B cell (primary cell): ENCODE measurements at regions of chrX and their contacts with region 1.

Region 1: GRCh38 chrX:63350941-63351616 is at the start of gene SPIN4:
- DNase-seq: peak; percentile 77
- ATAC-seq: peak; percentile 95
- H3K4me3 ChIP-seq: peak within 1 kb of the TSS; percentile 55 to 70 (median 63)
- H3K4me3 Mint-ChIP-seq: peak within 1 kb of the TSS; percentile 99
- H3K27ac ChIP-seq: peak within 1 kb of the TSS; percentile 28 to 29
- H3K27ac Mint-ChIP-seq: peak within 1 kb of the TSS; percentile 88
- H3K4me1 ChIP-seq: peaks cover 0 to 3% of the 10 kb centered on the region in 2 donors
- H3K4me1 Mint-ChIP-seq: peaks cover 16% of the 10 kb centered on the region
- H3K27me3 ChIP-seq: no peaks in the 10 kb centered on the region
- H3K27me3 Mint-ChIP-seq: no peaks in the 10 kb centered on the region
- CTCF ChIP-seq: no peak
- total RNA-seq, gene SPIN4: 5.4 and 5.8 TPM in 2 replicates

Region 2: GRCh38 chrX:63285375-63285774 is 65.7 kb before region 1 on chrX:
- CTCF ChIA-PET with region 1: no interaction called
- POLR2A ChIA-PET with region 1: no interaction called
- intact Hi-C with region 1: no loop called
- DNase-seq: no peak
- ATAC-seq: no peak
- H3K4me3 ChIP-seq: no peak overlapping the region
- H3K4me3 Mint-ChIP-seq: no peak overlapping the region
- H3K27ac ChIP-seq: no peak overlapping the region
- H3K27ac Mint-ChIP-seq: no peak overlapping the region
- H3K4me1 ChIP-seq: no peaks in the 10 kb centered on the region
- H3K4me1 Mint-ChIP-seq: no peaks in the 10 kb centered on the region
- H3K27me3 ChIP-seq: no peaks in the 10 kb centered on the region
- H3K27me3 Mint-ChIP-seq: no peaks in the 10 kb centered on the region
- CTCF ChIP-seq: no peak

Region 3: DNA sequence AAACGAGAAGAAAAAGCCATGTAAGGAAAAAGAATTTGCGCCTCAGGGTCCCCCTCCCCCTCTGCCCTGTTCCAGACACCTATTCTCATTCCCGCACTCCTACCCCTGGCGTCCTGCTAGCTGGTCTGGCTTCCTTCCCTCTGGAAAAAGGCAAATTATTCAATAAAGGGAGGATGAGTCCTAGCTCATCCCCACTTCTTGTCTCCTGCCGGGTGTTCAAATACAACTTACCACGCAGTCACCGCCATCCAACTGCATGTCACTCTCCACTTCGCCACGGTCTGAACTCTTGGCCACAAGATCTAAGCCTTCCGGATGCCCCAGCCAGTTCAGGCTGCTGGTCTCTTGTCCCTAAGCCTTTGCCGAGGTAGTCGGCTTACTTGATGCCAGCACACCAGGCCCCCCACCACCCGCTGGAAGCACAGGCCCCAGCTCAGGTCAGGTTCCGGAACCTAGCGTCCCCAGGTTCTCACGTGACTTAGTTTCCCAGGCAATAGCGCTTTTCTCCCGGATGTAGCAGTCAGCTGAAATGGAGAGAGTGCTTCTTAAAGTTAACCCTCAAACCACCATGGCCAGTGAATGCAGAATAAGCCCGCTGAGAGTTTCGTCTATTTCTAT is 209.6 kb after region 1 on chrX:
- CTCF ChIA-PET with region 1: no interaction called
- POLR2A ChIA-PET with region 1: no interaction called
- intact Hi-C with region 1: loop called (anchors 5 kb)
- DNase-seq: peak; percentile 63
- ATAC-seq: peak; percentile 68
- H3K4me3 ChIP-seq: peak overlapping the region; percentile 62 to 77 (median 63)
- H3K4me3 Mint-ChIP-seq: peak overlapping the region; percentile 99
- H3K27ac ChIP-seq: peak overlapping the region; percentile 38 to 75
- H3K27ac Mint-ChIP-seq: peak overlapping the region; percentile 91
- H3K4me1 ChIP-seq: peaks cover 6 to 8% of the 10 kb centered on the region in 2 donors
- H3K4me1 Mint-ChIP-seq: peaks cover 29% of the 10 kb centered on the region
- H3K27me3 ChIP-seq: peaks cover 0 to under 1% (median 0%) of the 10 kb centered on the region in 4 experiments
- H3K27me3 Mint-ChIP-seq: no peaks in the 10 kb centered on the region
- CTCF ChIP-seq: no peak

Region 4: DNA sequence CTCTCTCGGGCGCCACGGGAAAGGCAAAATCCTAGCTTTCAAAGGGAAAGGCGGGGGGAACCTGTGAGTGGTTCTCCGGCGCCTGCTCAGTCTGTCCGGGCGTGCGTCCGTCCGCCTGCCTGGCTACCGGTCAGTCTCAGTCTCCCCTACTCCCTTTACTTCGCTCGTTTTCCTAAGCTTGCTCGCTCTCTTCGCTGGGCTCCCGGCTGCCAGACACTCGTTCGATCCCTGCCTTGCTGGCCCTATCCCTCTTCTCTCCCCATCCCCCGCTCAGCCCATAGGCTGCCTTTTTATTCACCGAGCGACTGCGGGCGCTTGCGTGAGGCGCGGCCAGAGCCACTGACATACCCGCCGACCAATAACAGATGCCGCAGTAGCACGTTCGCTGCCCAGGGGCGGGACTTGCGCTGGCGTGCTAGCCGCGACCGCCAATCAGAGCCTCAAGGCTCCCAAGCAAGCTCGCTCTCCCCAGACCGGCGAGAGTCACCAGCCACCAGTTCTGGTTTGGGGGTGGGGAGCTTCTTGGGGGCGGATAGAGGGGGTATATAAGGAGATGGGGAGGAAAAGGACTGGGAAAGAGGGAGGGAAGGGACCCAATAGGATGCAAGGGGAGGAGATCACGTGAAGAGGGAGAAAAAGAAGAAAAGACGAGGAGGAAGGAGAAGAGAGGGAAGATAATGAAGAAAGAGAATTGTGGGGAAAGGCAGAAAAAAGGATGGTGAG is 403.9 kb after region 1 on chrX:
- CTCF ChIA-PET with region 1: no interaction called
- POLR2A ChIA-PET with region 1: no interaction called
- intact Hi-C with region 1: loop called (anchors 2 kb)
- DNase-seq: peak; percentile 89
- ATAC-seq: peak; percentile 98
- H3K4me3 ChIP-seq: peak overlapping the region; percentile 65 to 86 (median 75)
- H3K4me3 Mint-ChIP-seq: peak overlapping the region; percentile 100
- H3K27ac ChIP-seq: peak overlapping the region; percentile 79 to 80
- H3K27ac Mint-ChIP-seq: peak overlapping the region; percentile 97
- H3K4me1 ChIP-seq: peaks cover 4 to 14% of the 10 kb centered on the region in 2 donors
- H3K4me1 Mint-ChIP-seq: peaks cover 27% of the 10 kb centered on the region
- H3K27me3 ChIP-seq: no peaks in the 10 kb centered on the region
- H3K27me3 Mint-ChIP-seq: no peaks in the 10 kb centered on the region
- CTCF ChIP-seq: no peak